ENCODE measurements at regions of chr4 and their contacts with region 1.

Region 1: GRCh38 chr4:126616795-126617194 is 1016.0 kb upstream of the INTU start:
- DNase-seq: no peak
- ATAC-seq: no peak
- H3K4me3 ChIP-seq: no peak overlapping the region
- H3K27ac ChIP-seq: no peak overlapping the region
- H3K4me1 ChIP-seq: no peaks in the 10 kb centered on the region
- H3K27me3 ChIP-seq: no peaks in the 10 kb centered on the region
- CTCF ChIP-seq: no peak

Region 2: DNA sequence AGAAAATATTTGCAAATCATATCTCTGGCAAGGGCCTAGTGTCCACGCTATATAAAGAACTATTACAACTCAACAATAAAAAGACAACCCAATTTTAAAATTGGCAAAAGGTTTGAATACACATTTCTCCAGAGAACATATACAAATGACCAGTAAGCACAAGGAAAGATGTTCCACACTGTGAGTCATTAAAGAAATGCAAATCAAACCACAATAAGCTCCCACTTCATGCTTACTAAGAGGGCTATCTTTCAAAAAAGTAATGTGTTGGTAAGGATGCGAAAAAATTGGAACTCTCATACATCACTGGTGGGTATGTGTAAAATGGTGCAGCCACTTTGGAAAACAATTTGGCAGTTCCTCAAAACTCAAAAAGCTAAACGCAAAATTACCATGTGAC is 131.9 kb after region 1 on chr4:
- CTCF ChIA-PET with region 1: no interaction called
- POLR2A ChIA-PET with region 1: no interaction called
- intact Hi-C with region 1: no loop called
- DNase-seq: no peak
- ATAC-seq: no peak
- H3K4me3 ChIP-seq: no peak overlapping the region
- H3K27ac ChIP-seq: no peak overlapping the region
- H3K4me1 ChIP-seq: no peaks in the 10 kb centered on the region
- H3K27me3 ChIP-seq: no peaks in the 10 kb centered on the region
- CTCF ChIP-seq: no peak

Region 3: DNA sequence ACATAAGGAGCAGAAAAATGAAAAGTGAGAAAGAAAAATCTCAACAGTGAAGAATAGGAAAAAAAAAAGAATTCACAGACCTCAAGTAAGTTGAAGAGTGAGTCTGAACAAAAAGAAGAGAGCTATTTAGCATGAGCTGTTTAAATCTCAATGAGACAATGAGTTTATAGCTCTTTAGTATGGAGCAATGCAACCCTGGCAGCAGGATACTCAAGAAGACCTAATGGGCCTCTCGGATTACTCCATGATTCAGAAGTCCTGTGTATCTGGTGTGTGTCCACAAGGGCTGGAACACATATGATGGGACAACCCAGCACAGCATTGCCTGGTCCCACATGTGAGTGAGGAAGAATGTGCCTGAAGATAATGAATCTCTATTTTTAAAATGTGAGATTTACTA is 452.9 kb after region 1 on chr4:
- CTCF ChIA-PET with region 1: no interaction called
- POLR2A ChIA-PET with region 1: no interaction called
- intact Hi-C with region 1: no loop called
- DNase-seq: no peak
- ATAC-seq: no peak
- H3K4me3 ChIP-seq: no peak overlapping the region
- H3K27ac ChIP-seq: no peak overlapping the region
- H3K4me1 ChIP-seq: no peaks in the 10 kb centered on the region
- H3K27me3 ChIP-seq: no peaks in the 10 kb centered on the region
- CTCF ChIP-seq: no peak

Region 4: DNA sequence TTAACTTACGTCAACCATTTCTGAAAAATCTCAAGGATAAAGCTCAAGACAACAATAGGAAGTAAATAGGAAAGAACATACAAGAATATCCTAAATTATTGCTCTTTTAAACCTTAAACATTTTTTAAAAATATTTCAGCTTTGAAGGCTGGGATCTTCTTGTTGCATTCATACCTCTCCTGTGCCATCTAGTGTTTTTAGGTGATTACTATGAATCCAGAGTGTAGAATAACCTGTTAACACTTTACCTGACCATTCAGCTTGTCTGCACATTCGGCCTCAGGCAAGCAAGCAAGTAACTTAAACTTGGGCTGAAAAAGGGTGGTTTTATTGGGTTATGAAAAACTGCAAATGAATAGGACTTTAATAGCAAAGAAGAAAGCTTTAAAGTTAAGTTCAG is 508.1 kb after region 1 on chr4:
- CTCF ChIA-PET with region 1: no interaction called
- POLR2A ChIA-PET with region 1: no interaction called
- intact Hi-C with region 1: loop called (anchors 2 kb)
- DNase-seq: peak; percentile 6
- ATAC-seq: 0 out of 2 replicates have a peak, but pooled peaks have one; percentile 22
- H3K4me3 ChIP-seq: no peak overlapping the region
- H3K27ac ChIP-seq: no peak overlapping the region
- H3K4me1 ChIP-seq: no peaks in the 10 kb centered on the region
- H3K27me3 ChIP-seq: no peaks in the 10 kb centered on the region
- CTCF ChIP-seq: no peak; the same call in 1 of the 2 replicates